Activated CD4-positive, alpha-beta memory T cell treated with anti-CD3 and anti-CD28 coated beads for 36 hours (primary cell): ENCODE measurements at regions of chr16 and their contacts with region 1.

Region 1: GRCh38 chr16:87062569-87063442 is 254.4 kb downstream of the C16orf95 start:
- DNase-seq: peak; percentile 72
- H3K4me3 Mint-ChIP-seq: no peak overlapping the region
- H3K27ac Mint-ChIP-seq: no peak overlapping the region
- H3K4me1 Mint-ChIP-seq: no peaks in the 10 kb centered on the region
- H3K27me3 Mint-ChIP-seq: peaks cover 31% of the 10 kb centered on the region

Region 2: GRCh38 chr16:86806838-86807351 is 255.9 kb before region 1 on chr16:
- CTCF ChIA-PET with region 1: no interaction called
- POLR2A ChIA-PET with region 1: no interaction called
- intact Hi-C with region 1: no loop called
- DNase-seq: no peak
- H3K4me3 Mint-ChIP-seq: no peak overlapping the region
- H3K27ac Mint-ChIP-seq: no peak overlapping the region
- H3K4me1 Mint-ChIP-seq: no peaks in the 10 kb centered on the region
- H3K27me3 Mint-ChIP-seq: peaks cover 20% of the 10 kb centered on the region

Region 3: DNA sequence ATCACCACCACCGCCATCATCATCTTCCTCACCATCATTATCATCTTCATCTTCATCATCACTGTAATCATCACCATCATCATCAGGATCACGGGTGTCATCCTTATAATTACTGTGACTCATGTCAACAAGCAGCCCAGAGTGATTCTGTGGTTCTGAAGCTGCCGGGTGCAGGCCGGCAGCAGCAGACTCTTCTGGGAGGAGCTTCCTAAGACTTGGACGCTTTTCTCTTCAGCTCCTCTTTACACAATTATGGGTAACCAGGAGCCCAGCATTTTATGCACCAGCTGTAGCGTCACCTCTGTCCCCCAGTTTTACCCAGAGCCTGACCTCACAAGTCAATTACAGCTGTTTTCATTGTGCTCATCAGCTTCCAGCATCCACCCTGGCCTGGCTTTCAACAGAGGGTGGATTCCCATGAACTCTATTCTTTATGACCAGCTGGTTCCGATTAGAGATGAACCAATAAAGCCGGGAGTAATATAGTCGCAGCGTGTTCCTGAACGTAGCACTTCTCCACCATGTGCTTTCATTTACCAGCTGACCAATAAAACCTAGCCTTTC is 208.7 kb before region 1 on chr16:
- CTCF ChIA-PET with region 1: no interaction called
- POLR2A ChIA-PET with region 1: no interaction called
- intact Hi-C with region 1: no loop called
- DNase-seq: no peak
- H3K4me3 Mint-ChIP-seq: no peak overlapping the region
- H3K27ac Mint-ChIP-seq: no peak overlapping the region
- H3K4me1 Mint-ChIP-seq: no peaks in the 10 kb centered on the region
- H3K27me3 Mint-ChIP-seq: no peaks in the 10 kb centered on the region

Region 4: DNA sequence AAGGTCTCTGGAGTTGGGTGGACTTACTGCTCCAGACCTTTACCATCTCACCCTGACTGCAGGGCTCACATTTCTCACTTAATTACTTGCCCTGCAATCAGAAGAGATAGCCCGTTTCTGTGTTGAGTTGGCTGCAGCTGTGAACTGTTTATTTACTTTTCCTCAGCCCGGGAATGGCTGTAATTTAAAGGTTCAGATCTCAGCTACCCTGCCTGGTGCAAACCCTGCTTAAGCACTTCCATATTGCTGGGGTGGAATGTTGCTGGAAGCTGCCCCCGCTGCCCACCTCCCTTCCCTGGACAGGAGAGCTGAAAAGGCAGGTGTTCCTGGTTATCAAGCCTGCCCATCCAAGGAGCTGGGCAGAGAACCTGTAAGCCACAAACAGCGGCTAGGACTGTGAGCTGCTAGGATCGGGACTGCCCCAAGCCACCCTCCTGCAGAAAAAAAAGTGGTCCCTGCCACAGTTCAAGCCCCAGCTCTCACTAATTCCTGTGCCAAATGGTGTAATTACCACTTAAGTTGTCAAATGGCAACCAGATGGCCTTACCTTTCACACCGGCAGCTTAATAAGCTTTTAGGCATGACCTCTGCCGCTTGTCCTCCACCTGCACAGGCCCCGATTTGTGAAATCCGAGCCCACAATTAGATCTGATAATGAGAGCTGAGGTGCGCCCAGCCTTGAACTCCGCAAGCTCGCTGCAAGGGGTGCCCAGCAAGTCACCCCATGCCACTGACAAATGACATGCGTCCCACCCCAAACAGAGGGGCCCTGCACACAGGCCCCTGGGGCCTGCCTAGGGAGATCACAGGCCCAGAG is 15.4 kb before region 1 on chr16:
- CTCF ChIA-PET with region 1: interaction called, 14 read pairs
- POLR2A ChIA-PET with region 1: no interaction called
- intact Hi-C with region 1: no loop called
- DNase-seq: no peak
- H3K4me3 Mint-ChIP-seq: no peak overlapping the region
- H3K27ac Mint-ChIP-seq: no peak overlapping the region
- H3K4me1 Mint-ChIP-seq: no peaks in the 10 kb centered on the region
- H3K27me3 Mint-ChIP-seq: peaks cover 7% of the 10 kb centered on the region